ENCODE measurements at regions of chr6 and their contacts with region 1.

Region 1: GRCh38 chr6:132780770-132781371 is 17.6 kb downstream of the SLC18B1 start:
- DNase-seq: peak; percentile 21
- H3K4me3 Mint-ChIP-seq: no peak overlapping the region
- H3K27ac Mint-ChIP-seq: no peak overlapping the region
- H3K4me1 Mint-ChIP-seq: no peaks in the 10 kb centered on the region
- H3K27me3 Mint-ChIP-seq: no peaks in the 10 kb centered on the region
- CTCF ChIP-seq: peak; percentile 32

Region 2: DNA sequence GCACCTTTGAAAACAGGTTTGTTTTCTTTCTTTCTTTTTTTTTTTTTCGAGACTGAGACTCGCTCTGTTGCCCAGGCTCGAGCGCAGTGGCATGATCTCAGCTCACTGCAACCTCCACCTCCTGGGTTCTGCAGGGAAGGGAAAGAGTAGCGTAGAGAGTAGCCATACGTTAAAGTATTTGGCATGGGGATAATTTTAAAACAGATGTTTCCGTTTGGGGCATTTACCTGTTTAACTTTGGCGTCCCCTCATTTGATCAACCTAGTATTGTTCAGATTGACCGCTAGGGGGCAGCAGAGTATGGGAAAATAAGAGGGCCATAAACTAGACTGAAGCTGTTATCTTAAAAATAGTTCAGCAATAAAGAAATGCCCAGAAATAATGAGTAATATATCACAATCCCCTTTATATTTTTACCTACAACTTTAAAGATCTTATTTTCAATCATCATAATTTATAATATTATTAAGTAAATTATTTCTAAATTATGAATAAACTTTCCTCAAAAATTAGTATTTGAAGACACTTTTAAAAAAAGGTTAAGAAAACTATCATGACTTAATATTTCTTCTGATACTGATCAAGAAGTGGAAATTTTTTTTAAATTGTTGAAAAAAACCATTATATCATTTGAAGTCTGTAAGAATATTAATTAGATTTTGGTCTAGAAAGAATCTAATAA is 250.4 kb before region 1 on chr6:
- CTCF ChIA-PET with region 1: interaction called, 5 read pairs
- POLR2A ChIA-PET with region 1: no interaction called
- intact Hi-C with region 1: loop called (anchors 5 kb)
- DNase-seq: peak; percentile 78
- H3K4me3 Mint-ChIP-seq: no peak overlapping the region
- H3K27ac Mint-ChIP-seq: no peak overlapping the region
- H3K4me1 Mint-ChIP-seq: no peaks in the 10 kb centered on the region
- H3K27me3 Mint-ChIP-seq: no peaks in the 10 kb centered on the region
- CTCF ChIP-seq: peak; percentile 62

Measured in MCF 10A (cell line).